Panc1 (cell line): ENCODE measurements at regions of chr20 and their contacts with region 1.

Region 1: GRCh38 chr20:32040142-32041022 is 11.7 kb upstream of the HCK start:
- DNase-seq: no peak
- ATAC-seq: peak; percentile 52
- H3K4me3 ChIP-seq: no peak overlapping the region
- H3K27ac ChIP-seq: no peak overlapping the region
- H3K4me1 ChIP-seq: no peaks in the 10 kb centered on the region
- H3K27me3 ChIP-seq: peaks cover 2% of the 10 kb centered on the region; the same call in 1 of the 2 replicates
- CTCF ChIP-seq: no peak

Region 2: DNA sequence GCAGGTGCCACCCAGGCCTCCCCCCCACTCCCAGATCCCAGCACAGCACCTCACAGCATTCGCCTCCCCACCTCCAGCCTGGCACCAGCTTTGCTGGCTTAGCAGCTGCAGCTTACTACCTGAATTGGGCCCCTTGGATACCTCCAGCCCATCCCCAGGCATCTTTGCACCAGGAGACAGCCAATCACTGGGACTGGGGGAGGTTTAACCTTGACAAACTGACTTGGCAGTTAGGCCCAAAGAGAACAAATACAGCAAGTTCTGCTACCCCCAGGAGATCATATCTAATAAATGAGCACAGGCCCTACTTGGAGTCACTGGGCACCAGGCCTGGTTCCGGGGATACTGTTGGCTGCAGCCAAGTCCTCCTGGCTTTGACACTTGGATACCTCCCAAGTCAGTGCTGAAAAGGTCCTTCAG is 97.3 kb before region 1 on chr20:
- CTCF ChIA-PET with region 1: no interaction called
- POLR2A ChIA-PET with region 1: no interaction called
- in situ Hi-C with region 1: loop called (anchors 5 kb)
- intact Hi-C with region 1: no loop called
- DNase-seq: no peak
- ATAC-seq: peak; percentile 35
- H3K4me3 ChIP-seq: no peak overlapping the region
- H3K27ac ChIP-seq: peak overlapping the region; percentile 37; the same call in 1 of the 2 replicates
- H3K4me1 ChIP-seq: peaks cover 19% of the 10 kb centered on the region
- H3K27me3 ChIP-seq: no peaks in the 10 kb centered on the region
- CTCF ChIP-seq: no peak

Region 3: DNA sequence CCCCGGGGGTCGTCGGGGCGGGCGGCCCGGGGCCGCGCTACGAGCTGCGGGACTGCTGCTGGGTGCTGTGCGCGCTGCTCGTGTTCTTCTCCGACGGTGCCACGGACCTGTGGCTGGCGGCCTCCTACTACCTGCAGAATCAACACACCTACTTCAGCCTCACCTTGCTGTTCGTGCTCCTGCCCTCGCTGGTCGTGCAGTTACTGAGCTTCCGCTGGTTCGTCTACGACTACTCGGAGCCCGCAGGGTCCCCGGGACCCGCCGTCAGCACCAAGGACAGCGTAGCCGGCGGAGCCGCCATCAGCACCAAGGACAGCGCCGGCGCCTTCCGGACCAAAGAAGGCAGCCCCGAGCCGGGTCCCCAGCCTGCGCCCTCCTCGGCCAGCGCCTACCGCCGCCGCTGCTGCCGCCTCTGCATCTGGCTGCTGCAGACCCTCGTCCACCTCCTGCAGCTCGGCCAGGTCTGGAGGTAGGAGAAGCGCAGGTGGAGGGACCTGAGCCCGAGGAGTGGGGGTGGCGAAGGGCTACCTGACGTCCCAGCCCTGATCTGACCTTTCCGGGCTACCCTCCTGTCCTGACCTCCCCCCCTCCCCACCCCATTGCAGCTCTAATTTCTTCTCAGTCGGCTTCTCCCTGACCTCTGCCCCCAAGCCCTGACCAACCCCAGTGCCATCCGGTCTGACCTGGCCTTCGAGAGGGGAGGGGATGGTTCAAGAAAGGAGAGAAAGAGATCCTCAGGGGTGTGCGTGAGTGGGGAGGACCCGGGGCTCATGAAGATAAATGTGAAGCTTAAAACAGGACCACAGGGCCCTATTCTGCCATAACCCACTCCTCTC is 71.9 kb before region 1 on chr20:
- CTCF ChIA-PET with region 1: no interaction called
- POLR2A ChIA-PET with region 1: no interaction called
- in situ Hi-C with region 1: loop called (anchors 5 kb)
- intact Hi-C with region 1: no loop called
- DNase-seq: no peak
- ATAC-seq: peak; percentile 62
- H3K4me3 ChIP-seq: peak overlapping the region; percentile 43 to 45
- H3K27ac ChIP-seq: peak overlapping the region; percentile 93
- H3K4me1 ChIP-seq: peaks cover 56% of the 10 kb centered on the region
- H3K27me3 ChIP-seq: peaks cover 9% of the 10 kb centered on the region
- CTCF ChIP-seq: no peak

Region 4: DNA sequence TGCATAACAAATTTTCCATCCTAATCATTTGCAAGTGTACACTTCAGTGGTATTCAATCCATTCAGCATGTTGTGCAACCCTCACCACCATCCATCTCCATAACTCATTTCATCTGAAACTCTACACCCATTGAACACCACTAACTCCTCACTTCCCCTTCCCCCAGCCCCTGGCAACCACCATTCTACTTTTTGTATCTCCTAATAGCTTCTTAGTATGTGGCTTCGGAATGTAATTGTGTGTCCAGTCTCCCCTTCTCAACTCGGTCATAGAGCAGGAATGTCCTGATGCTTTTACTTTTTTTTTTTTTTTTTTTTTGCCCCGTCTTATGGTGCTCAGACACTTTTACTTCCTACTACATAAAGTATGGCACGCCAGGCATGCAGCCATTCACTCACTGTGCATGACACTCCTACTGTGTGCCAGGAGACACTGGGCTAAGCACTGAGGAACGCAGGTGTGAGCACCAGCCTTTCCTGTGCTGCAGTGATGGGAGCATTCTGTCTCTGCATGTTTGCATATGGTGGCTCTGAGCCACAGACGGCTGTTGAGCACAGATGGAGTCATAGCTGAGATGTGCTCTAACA is 26.9 kb after region 1 on chr20:
- CTCF ChIA-PET with region 1: interaction called, 10 read pairs
- POLR2A ChIA-PET with region 1: no interaction called
- in situ Hi-C with region 1: no loop called
- intact Hi-C with region 1: loop called (anchors 5 kb)
- DNase-seq: no peak
- ATAC-seq: no peak
- H3K4me3 ChIP-seq: no peak overlapping the region
- H3K27ac ChIP-seq: no peak overlapping the region
- H3K4me1 ChIP-seq: no peaks in the 10 kb centered on the region
- H3K27me3 ChIP-seq: peaks cover 8% of the 10 kb centered on the region; the same call in 1 of the 2 replicates
- CTCF ChIP-seq: no peak

Region 5: DNA sequence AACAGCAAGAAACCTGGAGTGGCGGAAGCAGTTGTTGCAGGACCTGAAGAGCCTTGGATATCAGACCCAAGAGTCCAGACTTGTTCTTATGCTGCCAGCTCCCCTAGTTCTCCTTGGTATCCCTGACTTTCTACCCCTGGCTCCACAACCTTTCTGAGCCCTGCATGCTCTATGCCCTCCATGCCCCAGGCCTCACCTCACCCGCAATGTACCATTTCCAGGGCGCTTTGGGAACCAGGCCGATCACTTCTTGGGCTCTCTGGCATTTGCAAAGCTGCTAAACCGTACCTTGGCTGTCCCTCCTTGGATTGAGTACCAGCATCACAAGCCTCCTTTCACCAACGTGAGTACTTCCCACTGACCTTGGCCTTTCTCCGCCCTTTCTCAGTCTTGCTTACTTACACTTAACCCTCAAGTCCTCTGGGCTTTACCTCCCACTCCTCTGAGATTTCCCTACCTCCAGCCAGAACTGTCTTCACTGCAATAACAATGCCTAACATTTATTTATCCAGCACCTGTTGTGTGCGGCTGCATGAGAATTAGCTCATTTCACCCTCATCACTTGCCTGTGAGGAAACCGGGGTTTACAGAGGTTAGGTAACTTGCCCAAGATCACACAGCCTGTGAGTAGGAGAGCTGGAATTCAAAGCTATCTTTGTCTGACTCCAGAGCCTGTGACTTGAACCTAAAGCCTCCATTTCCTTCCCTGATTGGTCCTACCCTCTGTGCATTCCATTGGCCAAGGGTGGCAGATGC is 169.6 kb after region 1 on chr20:
- CTCF ChIA-PET with region 1: no interaction called
- POLR2A ChIA-PET with region 1: no interaction called
- in situ Hi-C with region 1: loop called (anchors 10 kb)
- intact Hi-C with region 1: no loop called
- DNase-seq: no peak
- ATAC-seq: no peak
- H3K4me3 ChIP-seq: no peak overlapping the region
- H3K27ac ChIP-seq: no peak overlapping the region
- H3K4me1 ChIP-seq: peaks cover 27% of the 10 kb centered on the region
- H3K27me3 ChIP-seq: no peaks in the 10 kb centered on the region
- CTCF ChIP-seq: no peak